Gastrocnemius medialis (tissue), 4 donors: ENCODE measurements at regions of chr14 and their contacts with region 1.

Region 1: DNA sequence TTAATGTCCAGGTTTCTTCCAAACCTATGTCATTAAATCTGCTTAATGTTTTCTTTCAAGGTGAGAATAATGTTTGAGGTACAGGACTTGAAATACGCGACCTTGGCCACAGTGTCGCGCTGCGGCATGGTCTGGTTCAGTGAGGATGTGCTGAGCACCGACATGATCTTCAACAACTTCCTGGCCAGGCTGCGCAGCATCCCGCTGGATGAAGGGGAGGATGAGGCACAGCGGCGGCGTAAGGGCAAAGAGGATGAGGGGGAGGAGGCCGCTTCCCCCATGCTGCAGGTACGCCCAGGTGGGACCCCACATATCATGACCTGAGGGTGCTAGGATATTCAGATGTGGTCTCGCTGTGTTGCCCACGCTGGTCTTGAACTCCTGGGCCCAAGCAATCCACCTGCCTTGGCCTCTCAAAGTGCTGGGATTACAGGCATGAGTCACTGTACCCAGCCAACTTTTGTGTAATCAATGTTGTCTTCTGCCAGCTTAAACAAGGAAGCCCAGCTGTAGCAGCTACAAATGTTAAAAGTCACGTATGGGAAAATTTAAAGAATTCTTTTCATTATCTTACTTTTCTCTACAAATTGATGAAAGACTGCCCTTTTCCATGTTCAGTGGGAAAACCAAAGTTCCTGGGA is 50.8 kb downstream of the DYNC1H1 start:
- DNase-seq: no peak
- ATAC-seq: peak in 1 of 2 donors; percentile 49
- H3K4me3 ChIP-seq: no peak overlapping the region
- H3K27ac ChIP-seq: no peak overlapping the region
- H3K4me1 ChIP-seq: no peaks in the 10 kb centered on the region
- H3K27me3 ChIP-seq: no peaks in the 10 kb centered on the region
- CTCF ChIP-seq: no peak
- POLR2A ChIP-seq: no peak

Region 2: GRCh38 chr14:101997429-101998336 is 17.5 kb before region 1 on chr14:
- in situ Hi-C with region 1: no loop called
- intact Hi-C with region 1: loop called (anchors 2 kb)
- DNase-seq: no peak
- ATAC-seq: no peak
- H3K4me3 ChIP-seq: no peak overlapping the region
- H3K27ac ChIP-seq: no peak overlapping the region
- H3K4me1 ChIP-seq: no peaks in the 10 kb centered on the region
- H3K27me3 ChIP-seq: no peaks in the 10 kb centered on the region
- CTCF ChIP-seq: no peak
- POLR2A ChIP-seq: no peak